ENCODE measurements at regions of chr2 and their contacts with region 1.

Region 1: GRCh38 chr2:164841719-164842623 is at the start of gene COBLL1:
- DNase-seq: no peak
- H3K4me3 ChIP-seq: peak within 1 kb of the TSS; percentile 71
- CTCF ChIP-seq: peak; percentile 86

Region 2: DNA sequence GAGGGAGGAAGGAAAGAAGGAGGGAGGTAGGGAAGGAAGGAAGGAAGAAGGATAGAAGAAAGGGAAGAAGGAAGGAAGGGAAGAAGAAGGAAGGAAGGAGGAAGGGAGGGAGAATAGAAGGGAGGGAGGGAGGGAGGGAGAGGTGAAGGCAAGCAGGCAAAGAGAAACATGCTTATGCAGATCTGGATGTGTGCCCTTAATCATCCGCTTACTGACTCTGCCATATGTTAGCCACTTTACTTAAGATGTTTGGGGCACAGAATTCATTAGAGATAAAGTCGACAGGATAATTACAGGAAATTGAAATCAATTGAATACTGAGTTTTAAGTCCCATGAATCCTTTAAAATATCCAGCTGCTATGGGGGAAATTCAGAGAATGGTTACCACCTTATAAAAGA is 554.9 kb before region 1 on chr2:
- CTCF ChIA-PET with region 1: no interaction called
- POLR2A ChIA-PET with region 1: no interaction called
- DNase-seq: no peak
- H3K4me3 ChIP-seq: no peak overlapping the region
- CTCF ChIP-seq: no peak

Region 3: DNA sequence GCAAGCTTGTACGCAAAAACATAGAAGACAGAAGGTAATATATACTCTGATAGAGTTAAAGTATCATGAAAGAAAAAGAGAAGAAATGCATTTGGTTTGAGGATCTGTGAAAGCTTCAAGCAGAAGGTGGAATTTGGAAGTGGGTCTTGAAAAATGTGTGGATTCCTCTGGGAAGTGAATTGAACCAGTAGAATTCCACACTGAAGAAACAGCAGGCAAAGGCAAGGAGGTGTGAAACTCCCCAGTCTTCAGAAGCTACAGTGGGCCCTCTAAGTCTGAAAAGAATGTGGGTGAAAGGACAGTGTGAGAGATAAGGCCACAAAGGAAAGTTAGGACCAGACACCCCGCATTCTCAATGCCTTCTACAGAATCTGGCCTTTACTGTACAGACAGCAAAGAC is 25.9 kb before region 1 on chr2:
- CTCF ChIA-PET with region 1: interaction called, 11 read pairs
- POLR2A ChIA-PET with region 1: no interaction called
- DNase-seq: no peak
- H3K4me3 ChIP-seq: no peak overlapping the region
- CTCF ChIP-seq: no peak

Region 4: GRCh38 chr2:164859251-164859800 is 17.4 kb after region 1 on chr2:
- CTCF ChIA-PET with region 1: interaction called, 38 read pairs
- POLR2A ChIA-PET with region 1: interaction called, 3 read pairs
- DNase-seq: no peak
- H3K4me3 ChIP-seq: no peak overlapping the region
- CTCF ChIP-seq: no peak

Region 5: DNA sequence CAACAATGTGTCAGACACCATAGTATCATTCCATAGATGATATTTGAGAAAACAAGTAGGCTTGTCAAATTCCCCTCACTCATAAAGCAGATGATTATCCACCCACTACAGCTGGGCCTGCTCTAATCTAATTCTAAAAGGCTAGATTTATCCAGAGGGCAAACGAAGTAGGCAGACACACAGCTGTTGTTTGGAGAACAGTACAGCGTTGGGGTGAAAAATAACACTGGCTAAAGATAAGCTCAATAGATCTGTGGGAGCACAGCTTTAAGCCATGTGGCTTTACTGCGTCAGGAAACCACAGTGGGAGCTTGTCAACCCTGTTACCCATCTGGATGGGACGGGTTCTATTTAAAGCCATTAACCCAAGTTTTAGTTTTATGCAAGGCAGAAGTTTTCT is 48.6 kb after region 1 on chr2:
- CTCF ChIA-PET with region 1: interaction called, 15 read pairs
- POLR2A ChIA-PET with region 1: no interaction called
- DNase-seq: no peak
- H3K4me3 ChIP-seq: no peak overlapping the region
- CTCF ChIP-seq: no peak

Region 6: GRCh38 chr2:165120740-165121467 is 278.9 kb after region 1 on chr2:
- CTCF ChIA-PET with region 1: no interaction called
- POLR2A ChIA-PET with region 1: no interaction called
- DNase-seq: no peak
- H3K4me3 ChIP-seq: no peak overlapping the region
- CTCF ChIP-seq: no peak